Heart left ventricle (tissue), 16 donors: ENCODE measurements at regions of chr18 and their contacts with region 1.

Region 1: GRCh38 chr18:45384137-45384961 is 230.9 kb upstream of the SLC14A2 start:
- DNase-seq: peak in 4 of 5 donors; percentile 30 to 41 (median 39)
- ATAC-seq: peak; percentile 56 to 77 (median 72)
- H3K4me3 ChIP-seq: no peak overlapping the region
- H3K27ac ChIP-seq: no peak overlapping the region
- H3K4me1 ChIP-seq: peaks cover 0 to 9% (median 0%) of the 10 kb centered on the region in 12 donors
- H3K27me3 ChIP-seq: peaks cover 0 to 6% (median 0%) of the 10 kb centered on the region in 9 donors
- CTCF ChIP-seq: peak; percentile 43 to 79 (median 64)
- POLR2A ChIP-seq: no peak

Region 2: DNA sequence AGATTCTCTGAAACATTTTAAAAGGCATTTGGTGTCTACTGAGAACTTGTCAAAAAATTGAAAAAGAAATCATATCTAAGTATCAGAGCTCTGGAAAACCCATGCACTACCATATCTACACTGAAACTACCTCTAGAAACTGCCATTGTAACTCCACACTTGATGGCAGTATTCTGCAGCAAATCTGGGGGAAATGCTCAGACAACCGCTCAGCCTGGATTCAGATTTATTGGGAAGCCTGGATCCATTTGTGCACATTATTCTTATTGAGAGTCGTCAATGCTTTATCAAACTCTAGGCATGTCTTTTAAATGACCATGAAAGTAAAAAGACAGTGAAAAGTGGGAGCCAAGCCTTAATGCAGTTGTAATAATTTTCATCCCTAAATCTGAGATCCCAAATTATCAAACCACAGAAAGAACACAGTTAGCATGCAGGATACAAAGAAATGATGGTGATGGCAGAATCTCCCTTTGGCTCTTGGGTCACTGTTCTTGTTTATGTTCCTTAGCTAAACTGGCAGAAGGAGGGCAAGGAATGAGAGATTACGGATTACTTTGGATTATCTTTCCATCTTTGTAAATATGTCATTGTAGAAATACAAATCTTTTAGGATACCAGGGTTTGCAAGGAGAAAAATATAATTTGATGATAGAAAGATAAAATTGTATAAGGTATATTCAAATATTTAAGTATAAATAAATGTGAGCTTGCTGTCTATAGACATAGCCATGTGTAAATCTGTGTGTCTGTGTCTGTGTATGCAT is 1594.9 kb before region 1 on chr18:
- intact Hi-C with region 1: loop called in 3 of 10 experiments (anchors 10 kb)
- DNase-seq: no peak
- ATAC-seq: peak in 2 of 4 donors; percentile 44 to 64
- H3K4me3 ChIP-seq: no peak overlapping the region
- H3K27ac ChIP-seq: no peak overlapping the region
- H3K4me1 ChIP-seq: peaks cover 0 to 3% (median 0%) of the 10 kb centered on the region in 12 donors
- H3K27me3 ChIP-seq: no peaks in the 10 kb centered on the region
- CTCF ChIP-seq: peak in 9 of 12 donors; percentile 10 to 64 (median 44)
- POLR2A ChIP-seq: no peak

Region 3: GRCh38 chr18:44130376-44130942 is 1253.9 kb before region 1 on chr18:
- intact Hi-C with region 1: loop called in 4 of 10 experiments (anchors 5 to 10 kb)
- DNase-seq: no peak
- ATAC-seq: peak in 1 of 4 donors; percentile 51
- H3K4me3 ChIP-seq: no peak overlapping the region
- H3K27ac ChIP-seq: no peak overlapping the region
- H3K4me1 ChIP-seq: no peaks in the 10 kb centered on the region
- H3K27me3 ChIP-seq: no peaks in the 10 kb centered on the region
- CTCF ChIP-seq: peak; percentile 38 to 77 (median 60)
- POLR2A ChIP-seq: no peak

Region 4: GRCh38 chr18:44958455-44958854 is 425.9 kb before region 1 on chr18:
- intact Hi-C with region 1: no loop called
- DNase-seq: no peak
- ATAC-seq: no peak
- H3K4me3 ChIP-seq: no peak overlapping the region
- H3K27ac ChIP-seq: no peak overlapping the region
- H3K4me1 ChIP-seq: peaks cover 0 to 35% (median 16%) of the 10 kb centered on the region in 12 donors
- H3K27me3 ChIP-seq: no peaks in the 10 kb centered on the region
- CTCF ChIP-seq: no peak
- POLR2A ChIP-seq: no peak

Region 5: GRCh38 chr18:45275367-45276113 is 108.8 kb before region 1 on chr18:
- intact Hi-C with region 1: loop called in 6 of 10 experiments (anchors 2 to 10 kb)
- DNase-seq: no peak
- ATAC-seq: no peak
- H3K4me3 ChIP-seq: no peak overlapping the region
- H3K27ac ChIP-seq: no peak overlapping the region
- H3K4me1 ChIP-seq: no peaks in the 10 kb centered on the region
- H3K27me3 ChIP-seq: no peaks in the 10 kb centered on the region
- CTCF ChIP-seq: peak; percentile 55 to 91 (median 72)
- POLR2A ChIP-seq: no peak

Region 6: GRCh38 chr18:45430041-45430440 is 45.7 kb after region 1 on chr18:
- intact Hi-C with region 1: no loop called
- DNase-seq: no peak
- ATAC-seq: no peak
- H3K4me3 ChIP-seq: no peak overlapping the region
- H3K27ac ChIP-seq: no peak overlapping the region
- H3K4me1 ChIP-seq: peaks cover 0 to 2% (median 0%) of the 10 kb centered on the region in 12 donors
- H3K27me3 ChIP-seq: peaks cover 0 to 3% (median 0%) of the 10 kb centered on the region in 9 donors
- CTCF ChIP-seq: no peak
- POLR2A ChIP-seq: no peak

Region 7: GRCh38 chr18:45441110-45441842 is 56.9 kb after region 1 on chr18:
- intact Hi-C with region 1: loop called in 1 of 10 experiments (anchors 10 kb)
- DNase-seq: no peak
- ATAC-seq: no peak
- H3K4me3 ChIP-seq: no peak overlapping the region
- H3K27ac ChIP-seq: no peak overlapping the region
- H3K4me1 ChIP-seq: no peaks in the 10 kb centered on the region
- H3K27me3 ChIP-seq: no peaks in the 10 kb centered on the region
- CTCF ChIP-seq: peak in 2 of 12 donors; percentile 9 to 15
- POLR2A ChIP-seq: no peak